GM10248 (cell line): ENCODE measurements at regions of chr18 and their contacts with region 1.

Region 1: DNA sequence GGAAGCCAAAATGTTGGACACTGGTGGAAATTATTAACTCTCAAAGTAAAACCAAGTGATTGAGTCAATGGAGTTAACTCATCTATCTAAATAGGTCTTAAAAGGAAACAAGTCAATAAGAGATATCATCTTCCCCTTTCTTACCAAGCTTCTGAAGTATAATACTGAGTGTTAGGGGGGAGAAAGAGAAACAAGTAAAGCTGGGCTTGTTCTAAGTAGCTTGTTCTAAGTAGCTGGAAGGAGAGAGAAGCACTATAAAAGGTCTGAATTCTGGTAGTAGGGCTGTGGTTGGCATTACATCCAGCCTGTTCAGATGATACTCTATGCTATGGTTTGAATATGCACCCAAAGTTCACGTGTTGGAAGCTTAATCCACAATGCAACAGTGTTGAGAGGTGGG is 26.8 kb downstream of the YES1 start:
- DNase-seq: no peak
- CTCF ChIP-seq: no peak

Region 2: GRCh38 chr18:801137-801536 is 15.9 kb after region 1 on chr18:
- CTCF ChIA-PET with region 1: interaction called, 14 read pairs
- POLR2A ChIA-PET with region 1: no interaction called
- DNase-seq: no peak
- CTCF ChIP-seq: no peak